Activated CD4-positive, alpha-beta memory T cell treated with anti-CD3 and anti-CD28 coated beads for 36 hours (primary cell): ENCODE measurements at regions of chr3 and their contacts with region 1.

Region 1: DNA sequence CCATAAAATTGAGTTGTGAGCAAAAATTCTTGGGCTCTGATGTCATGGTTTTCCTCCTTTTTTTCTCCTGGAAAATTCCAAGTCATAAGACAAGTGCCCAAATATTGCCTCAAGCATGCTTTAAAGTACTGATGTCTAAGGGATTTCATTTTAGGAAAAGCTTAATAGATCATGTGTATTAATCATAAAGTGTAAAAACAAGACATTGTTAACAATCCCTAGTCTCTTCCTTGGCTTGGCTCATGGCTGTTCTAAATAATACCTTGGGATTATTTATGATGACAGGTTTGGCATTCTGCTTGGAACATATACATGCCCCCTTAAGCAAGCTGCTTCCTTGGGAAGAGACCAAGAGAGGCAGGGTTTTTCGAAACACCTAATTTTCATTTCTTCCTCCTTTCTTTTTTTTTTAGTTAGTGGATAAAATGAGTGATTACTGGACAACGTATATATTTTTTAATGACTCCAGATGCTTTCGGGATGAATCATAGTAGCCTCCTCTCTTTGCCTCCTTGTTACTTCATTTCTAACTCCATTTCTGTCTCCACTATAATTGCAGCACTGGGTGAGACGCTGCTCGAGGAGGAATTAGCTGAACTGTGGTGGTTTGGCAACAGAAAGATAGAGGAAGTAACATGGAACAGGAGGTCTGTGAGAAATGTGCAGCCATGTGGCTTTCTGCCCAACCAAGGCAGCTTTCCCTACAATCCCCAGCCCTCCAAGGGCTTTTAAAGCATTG is 104.9 kb downstream of the TPRG1 start:
- DNase-seq: no peak
- H3K4me3 Mint-ChIP-seq: no peak overlapping the region
- H3K27ac Mint-ChIP-seq: peak overlapping the region; percentile 5
- H3K4me1 Mint-ChIP-seq: peaks cover 30% of the 10 kb centered on the region
- H3K27me3 Mint-ChIP-seq: no peaks in the 10 kb centered on the region

Region 2: GRCh38 chr3:188400494-188401243 is 876.0 kb before region 1 on chr3:
- CTCF ChIA-PET with region 1: no interaction called
- POLR2A ChIA-PET with region 1: no interaction called
- intact Hi-C with region 1: no loop called
- DNase-seq: peak; percentile 48
- H3K4me3 Mint-ChIP-seq: no peak overlapping the region
- H3K27ac Mint-ChIP-seq: peak overlapping the region; percentile 4
- H3K4me1 Mint-ChIP-seq: peaks cover 68% of the 10 kb centered on the region
- H3K27me3 Mint-ChIP-seq: no peaks in the 10 kb centered on the region

Region 3: DNA sequence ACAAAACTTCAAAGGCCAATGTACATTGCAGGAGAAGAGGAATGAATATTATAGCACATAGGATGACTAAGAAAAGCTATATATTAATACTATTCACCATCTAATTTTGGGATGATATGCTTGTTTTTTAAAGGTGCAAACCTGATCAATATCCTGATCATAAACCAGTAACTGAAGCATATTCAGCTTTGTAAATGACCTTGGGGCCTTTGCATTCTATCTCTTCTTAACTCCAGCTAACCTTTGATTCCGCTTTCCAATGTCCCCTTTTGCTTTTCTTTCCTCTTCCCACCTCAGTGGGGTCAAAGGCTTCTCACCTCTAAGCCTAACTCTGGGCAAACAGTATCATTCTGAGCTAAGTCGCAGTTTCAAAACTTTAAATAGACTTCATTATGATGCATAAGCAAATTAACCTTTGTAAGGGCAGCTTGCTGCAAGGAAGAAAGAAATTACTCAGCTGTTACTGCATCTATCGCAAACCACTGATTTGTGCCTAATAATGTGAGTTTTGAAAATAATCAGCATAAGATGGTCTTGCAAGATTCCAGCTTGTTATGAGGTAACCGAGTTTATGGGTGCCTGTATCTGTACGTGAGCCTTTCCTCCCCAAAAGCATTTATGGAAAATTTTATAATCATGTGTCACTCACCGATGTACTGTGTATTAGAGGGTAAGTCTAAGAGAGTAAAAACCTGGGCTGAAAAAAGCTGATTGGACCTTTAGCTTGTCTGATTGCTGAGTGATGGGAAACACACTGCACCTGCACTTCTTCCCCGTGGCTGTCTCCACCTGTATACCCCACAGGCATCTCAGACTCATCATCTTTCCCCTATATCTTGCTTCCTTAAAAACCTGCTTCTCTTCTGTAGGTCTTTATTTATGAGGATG is 11.9 kb after region 1 on chr3:
- CTCF ChIA-PET with region 1: interaction called, 9 read pairs
- POLR2A ChIA-PET with region 1: interaction called, 4 read pairs
- intact Hi-C with region 1: loop called (anchors 1 kb)
- DNase-seq: no peak
- H3K4me3 Mint-ChIP-seq: no peak overlapping the region
- H3K27ac Mint-ChIP-seq: peak overlapping the region; percentile 33
- H3K4me1 Mint-ChIP-seq: peaks cover 33% of the 10 kb centered on the region
- H3K27me3 Mint-ChIP-seq: no peaks in the 10 kb centered on the region

Region 4: DNA sequence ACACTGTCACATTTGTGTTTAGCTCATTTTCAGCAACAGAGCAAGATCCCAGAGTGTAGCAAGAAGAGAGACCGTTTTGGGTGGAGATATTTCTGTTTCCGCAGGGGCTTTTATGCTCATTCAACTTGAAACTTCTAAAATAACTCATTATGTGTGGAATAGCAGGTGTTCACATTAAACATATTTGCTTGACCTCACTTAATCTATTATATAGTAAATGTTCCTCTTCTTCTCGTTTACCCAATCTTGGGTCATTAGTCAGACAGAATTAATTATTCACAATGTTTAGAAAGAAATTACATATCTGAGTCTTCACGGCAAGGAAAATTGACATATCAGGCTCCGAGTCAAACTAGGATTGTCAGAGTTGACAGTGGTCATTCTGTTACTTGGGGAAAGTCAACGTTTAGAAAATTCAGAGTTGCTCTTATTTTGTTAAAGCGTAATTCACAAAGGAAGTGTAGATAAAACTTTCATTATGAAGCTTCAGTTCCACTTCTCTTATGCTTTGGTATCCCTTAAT is 118.0 kb after region 1 on chr3:
- CTCF ChIA-PET with region 1: interaction called, 7 read pairs
- POLR2A ChIA-PET with region 1: no interaction called
- intact Hi-C with region 1: loop called (anchors 5 kb)
- DNase-seq: no peak
- H3K4me3 Mint-ChIP-seq: no peak overlapping the region
- H3K27ac Mint-ChIP-seq: no peak overlapping the region
- H3K4me1 Mint-ChIP-seq: peaks cover 20% of the 10 kb centered on the region
- H3K27me3 Mint-ChIP-seq: no peaks in the 10 kb centered on the region